WTC11 (cell line): ENCODE measurements at regions of chr14 and their contacts with region 1.

Region 1: GRCh38 chr14:93939304-93940229 is 12.4 kb downstream of the FAM181A start:
- DNase-seq: peak; percentile 93
- ATAC-seq: peak; percentile 90
- H3K4me3 Mint-ChIP-seq: peak overlapping the region; percentile 57
- H3K27ac Mint-ChIP-seq: no peak overlapping the region
- H3K4me1 Mint-ChIP-seq: peaks cover 10% of the 10 kb centered on the region
- H3K27me3 Mint-ChIP-seq: peaks cover 30% of the 10 kb centered on the region
- CTCF ChIP-seq: peak; percentile 92

Region 2: DNA sequence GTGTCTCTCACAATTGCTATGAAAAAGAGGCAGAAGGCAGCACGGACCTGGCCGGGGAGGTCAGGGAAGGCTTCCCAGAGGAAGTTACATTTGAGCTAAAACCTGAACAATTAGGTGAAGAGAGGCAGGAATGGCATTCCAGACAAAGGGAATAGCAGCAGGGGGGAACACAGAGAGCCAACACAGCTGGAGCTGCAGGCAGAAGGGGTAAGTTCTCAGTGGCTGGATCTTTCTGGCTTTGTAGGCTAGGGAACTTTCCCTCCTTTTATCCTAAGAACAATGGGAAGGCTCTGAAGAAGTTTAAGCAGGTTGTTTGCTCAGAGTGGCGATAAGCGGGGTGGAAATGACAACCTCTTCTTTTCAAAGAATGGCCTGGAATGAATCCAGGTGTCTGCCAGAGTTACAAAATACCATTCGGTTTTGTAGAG is 251.3 kb before region 1 on chr14:
- CTCF ChIA-PET with region 1: interaction called, 12 read pairs
- POLR2A ChIA-PET with region 1: no interaction called
- DNase-seq: peak; percentile 74
- ATAC-seq: peak; percentile 83
- H3K4me3 Mint-ChIP-seq: peak overlapping the region; percentile 50
- H3K27ac Mint-ChIP-seq: peak overlapping the region; percentile 90
- H3K4me1 Mint-ChIP-seq: peaks cover 76% of the 10 kb centered on the region
- H3K27me3 Mint-ChIP-seq: 0 out of 2 replicates have a peak, but pooled peaks cover 2% of the 10 kb centered on the region
- CTCF ChIP-seq: no peak

Region 3: DNA sequence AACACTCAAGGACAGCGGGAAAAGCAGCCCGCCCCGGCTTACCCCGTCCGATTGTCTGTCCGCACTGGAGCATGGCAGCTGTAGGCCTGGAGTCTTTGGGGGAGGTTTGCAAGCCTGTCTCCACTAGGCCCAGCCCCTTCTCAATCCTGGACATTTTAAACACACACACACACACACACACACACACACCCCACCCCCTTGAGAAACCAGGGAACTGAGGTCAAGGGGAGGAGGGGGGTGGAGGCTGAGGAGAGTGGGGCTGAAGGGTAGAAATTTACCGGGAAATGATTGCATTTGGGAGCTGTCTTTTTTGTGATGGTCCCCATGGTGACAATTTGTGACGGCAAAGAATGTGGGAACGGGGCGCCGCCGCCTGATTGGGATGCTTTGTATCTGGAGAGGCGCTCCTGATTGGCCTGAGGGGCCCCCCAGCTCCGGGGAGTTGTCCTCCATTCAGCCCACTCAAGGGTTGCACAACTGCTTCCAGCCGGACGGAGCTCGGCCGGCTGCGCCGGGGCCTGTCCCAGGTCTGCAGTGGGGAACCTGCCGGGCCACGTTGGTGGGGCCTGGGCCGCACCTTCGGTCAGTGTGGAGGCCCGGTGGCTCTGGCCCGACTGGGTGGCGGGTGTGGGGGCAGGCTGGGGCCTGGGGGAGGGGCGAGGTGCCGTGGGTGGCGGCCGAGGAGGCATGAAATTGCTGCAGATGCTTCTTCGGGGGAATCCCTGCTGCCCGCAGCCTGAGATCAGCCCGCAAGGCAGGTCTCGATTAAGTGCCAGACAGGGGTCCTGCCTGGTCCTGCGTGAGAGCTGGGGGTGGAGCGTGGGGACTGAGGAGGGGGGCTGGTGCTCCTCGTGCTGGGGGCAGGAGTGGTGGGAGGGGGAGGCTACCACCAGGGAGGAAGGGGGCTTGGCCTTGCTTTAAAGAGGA is 12.4 kb before region 1 on chr14 and contains the start of gene FAM181A:
- CTCF ChIA-PET with region 1: interaction called, 37 read pairs
- POLR2A ChIA-PET with region 1: no interaction called
- DNase-seq: no peak
- ATAC-seq: no peak
- H3K4me3 Mint-ChIP-seq: no peak within 1 kb of the TSS
- H3K27ac Mint-ChIP-seq: no peak within 1 kb of the TSS
- H3K4me1 Mint-ChIP-seq: peaks cover 6% of the 10 kb centered on the region; the same call in 1 of the 2 replicates
- H3K27me3 Mint-ChIP-seq: no peaks in the 10 kb centered on the region
- CTCF ChIP-seq: no peak
- total RNA-seq, gene FAM181A: not detected in 3 replicates

Region 4: DNA sequence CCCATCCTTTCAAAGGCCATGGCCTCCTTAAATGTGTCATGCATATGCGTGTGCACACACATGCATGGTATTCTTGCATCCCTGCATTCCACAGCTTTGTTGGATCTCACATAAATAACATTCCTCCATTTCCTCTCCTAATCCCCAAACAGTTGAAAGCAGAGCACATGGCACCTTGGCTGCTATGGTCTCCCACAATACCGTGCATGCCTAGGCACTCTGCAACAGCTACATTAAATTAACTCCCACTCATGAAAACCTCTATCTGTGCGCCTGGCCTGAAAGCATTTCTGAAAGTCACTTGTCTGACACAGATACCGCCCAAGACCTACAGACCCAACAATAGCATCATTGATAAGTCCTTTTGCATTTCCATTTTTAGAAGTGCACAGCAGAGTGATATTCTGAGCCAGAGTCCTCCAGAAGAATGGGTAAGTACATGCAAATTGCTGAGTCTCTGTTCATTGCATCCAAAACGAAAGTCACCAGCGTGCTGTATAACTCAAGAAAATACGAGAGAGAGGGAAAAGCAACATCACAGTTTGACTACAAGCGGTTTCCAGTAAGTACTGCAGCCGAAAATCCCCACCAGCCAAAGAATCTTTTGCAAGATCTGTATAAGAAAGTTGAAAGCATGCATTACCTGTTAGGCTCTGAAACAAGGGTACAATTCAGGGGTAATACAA is 36.4 kb after region 1 on chr14:
- CTCF ChIA-PET with region 1: interaction called, 71 read pairs
- POLR2A ChIA-PET with region 1: no interaction called
- DNase-seq: no peak
- ATAC-seq: no peak
- H3K4me3 Mint-ChIP-seq: no peak overlapping the region
- H3K27ac Mint-ChIP-seq: peak overlapping the region; percentile 4; the same call in 1 of the 2 replicates
- H3K4me1 Mint-ChIP-seq: peaks cover 8% of the 10 kb centered on the region
- H3K27me3 Mint-ChIP-seq: no peaks in the 10 kb centered on the region
- CTCF ChIP-seq: no peak

Region 5: GRCh38 chr14:94015223-94015622 is 75.7 kb after region 1 on chr14:
- CTCF ChIA-PET with region 1: interaction called, 34 read pairs
- POLR2A ChIA-PET with region 1: interaction called, 3 read pairs
- DNase-seq: no peak
- ATAC-seq: no peak
- H3K4me3 Mint-ChIP-seq: no peak overlapping the region
- H3K27ac Mint-ChIP-seq: no peak overlapping the region
- H3K4me1 Mint-ChIP-seq: peaks cover 9% of the 10 kb centered on the region
- H3K27me3 Mint-ChIP-seq: no peaks in the 10 kb centered on the region
- CTCF ChIP-seq: no peak

Region 6: DNA sequence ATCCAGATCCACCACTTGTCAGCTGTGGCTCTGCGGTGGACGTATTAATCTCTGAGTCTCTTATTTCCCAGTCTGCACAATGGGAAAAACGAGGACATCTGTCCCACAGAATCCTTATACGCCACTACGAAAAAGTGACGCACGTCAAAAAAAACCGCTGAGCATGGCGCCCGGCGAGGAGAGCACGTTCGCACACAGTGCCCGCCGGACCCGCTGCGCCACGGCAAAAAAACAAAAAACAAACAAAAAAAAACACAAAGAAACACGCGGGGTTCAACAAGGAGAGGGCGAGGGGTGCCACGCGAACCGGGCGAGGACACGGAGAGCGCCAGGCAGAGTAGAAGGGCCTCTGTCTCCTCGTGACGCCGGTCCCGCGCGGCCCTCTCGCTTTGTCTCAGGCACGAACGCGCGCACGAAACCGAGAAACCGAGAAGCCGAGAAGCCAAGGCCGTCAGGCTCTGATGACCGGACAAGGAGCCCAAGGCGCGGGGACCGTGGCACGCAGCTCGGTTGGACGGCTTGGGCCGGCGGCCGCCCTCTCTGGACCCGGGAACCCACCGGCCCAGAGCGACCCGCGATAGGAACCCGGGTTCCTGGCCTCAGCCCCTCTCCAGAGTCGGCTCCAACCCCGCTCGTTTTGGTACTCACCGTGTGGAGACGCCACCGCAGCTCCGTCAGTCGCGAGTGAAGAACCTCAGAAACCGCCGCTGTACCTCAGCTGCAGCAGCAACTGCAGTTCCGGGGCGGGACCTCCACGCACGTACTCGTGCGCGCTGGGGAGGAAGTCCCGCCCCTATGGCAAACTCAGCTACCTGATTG is 141.1 kb after region 1 on chr14 and contains the start of gene DDX24:
- CTCF ChIA-PET with region 1: interaction called, 20 read pairs
- POLR2A ChIA-PET with region 1: no interaction called
- DNase-seq: peak; percentile 96
- ATAC-seq: peak; percentile 36
- H3K4me3 Mint-ChIP-seq: peak within 1 kb of the TSS; percentile 100
- H3K27ac Mint-ChIP-seq: peak within 1 kb of the TSS; percentile 93
- H3K4me1 Mint-ChIP-seq: peaks cover 29% of the 10 kb centered on the region
- H3K27me3 Mint-ChIP-seq: no peaks in the 10 kb centered on the region
- CTCF ChIP-seq: no peak
- total RNA-seq, gene DDX24: 137 to 174 TPM (median 140 TPM) in 3 replicates